Left ventricle myocardium inferior (tissue), 1 donor: ENCODE measurements at regions of chr3 and their contacts with region 1.

Region 1: GRCh38 chr3:100254168-100254777 is 6.5 kb upstream of the TBC1D23 start:
- DNase-seq: peak; percentile 29
- H3K4me3 ChIP-seq: no peak overlapping the region
- H3K27ac ChIP-seq: peak overlapping the region; percentile 50
- H3K4me1 ChIP-seq: peaks cover 21% of the 10 kb centered on the region
- H3K27me3 ChIP-seq: no peaks in the 10 kb centered on the region
- CTCF ChIP-seq: peak; percentile 95

Region 2: DNA sequence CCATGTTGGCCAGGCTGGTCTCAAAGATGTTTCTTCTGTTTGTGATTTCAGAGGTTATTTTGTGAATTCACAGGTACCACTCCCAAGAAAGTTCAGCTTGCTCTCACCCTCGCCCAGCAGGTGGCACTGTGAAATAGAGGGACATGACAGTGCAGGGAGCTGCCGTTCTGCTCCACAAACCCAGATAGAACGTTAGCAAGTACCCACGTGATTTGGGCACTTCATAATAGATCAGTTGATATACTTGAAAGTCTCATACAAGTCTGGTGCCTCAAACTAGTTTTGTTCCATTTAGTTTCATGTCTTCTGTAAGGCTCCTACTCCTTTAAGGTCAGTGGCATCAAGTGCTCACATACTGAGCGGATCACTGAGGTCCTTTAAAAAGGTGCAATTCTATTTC is 185.4 kb before region 1 on chr3:
- intact Hi-C with region 1: loop called (anchors 5 kb)
- DNase-seq: peak; percentile 70
- H3K4me3 ChIP-seq: no peak overlapping the region
- H3K27ac ChIP-seq: peak overlapping the region; percentile 12
- H3K4me1 ChIP-seq: peaks cover 46% of the 10 kb centered on the region
- H3K27me3 ChIP-seq: no peaks in the 10 kb centered on the region
- CTCF ChIP-seq: peak; percentile 84

Region 3: DNA sequence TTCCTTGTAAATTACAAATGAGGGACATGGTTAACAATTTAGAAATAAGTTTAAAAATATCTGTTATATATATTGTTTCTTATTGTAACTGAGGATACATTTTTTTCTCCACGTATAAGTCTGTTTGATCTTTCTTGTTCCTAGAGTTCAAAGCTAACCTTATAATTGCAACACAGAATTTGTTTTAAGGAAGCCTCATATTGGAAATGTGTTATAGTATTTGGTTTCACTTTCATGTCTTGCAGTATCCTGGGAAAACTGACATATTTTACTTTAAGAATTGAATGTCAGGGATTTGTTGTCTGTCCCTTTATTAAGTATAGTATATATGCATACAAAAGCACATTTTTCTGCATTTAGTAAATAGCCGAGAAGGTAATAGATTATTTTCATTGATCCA is 56.7 kb after region 1 on chr3:
- intact Hi-C with region 1: no loop called
- DNase-seq: no peak
- H3K4me3 ChIP-seq: no peak overlapping the region
- H3K27ac ChIP-seq: no peak overlapping the region
- H3K4me1 ChIP-seq: peaks cover 9% of the 10 kb centered on the region
- H3K27me3 ChIP-seq: no peaks in the 10 kb centered on the region
- CTCF ChIP-seq: no peak